A549 (cell line): ENCODE measurements at regions of chr7 and their contacts with region 1.

Region 1: GRCh38 chr7:149147072-149147751 is at the start of gene ZNF398:
- DNase-seq: peak; percentile 82 to 85
- ATAC-seq: peak; percentile 82 to 91
- H3K4me3 ChIP-seq: peak within 1 kb of the TSS; percentile 91
- H3K27ac ChIP-seq: peak within 1 kb of the TSS; percentile 98 to 99
- H3K4me1 ChIP-seq: peaks cover 32% of the 10 kb centered on the region
- CTCF ChIP-seq: peak; percentile 93
- EP300 ChIP-seq: no peak
- POLR2A ChIP-seq: peak; percentile 84
- RAD21 ChIP-seq: no peak; a peak in 1 of 5 replicates
- polyA plus RNA-seq, gene ZNF398: 8.1 and 8.4 TPM in 2 replicates

Region 2: GRCh38 chr7:149133028-149133705 is 14.0 kb before region 1 on chr7:
- CTCF ChIA-PET with region 1: interaction called, 84 read pairs
- POLR2A ChIA-PET with region 1: interaction called, 16 read pairs
- DNase-seq: no peak
- ATAC-seq: no peak
- H3K4me3 ChIP-seq: no peak overlapping the region
- H3K27ac ChIP-seq: no peak overlapping the region
- H3K4me1 ChIP-seq: peaks cover 3% of the 10 kb centered on the region
- CTCF ChIP-seq: no peak
- EP300 ChIP-seq: no peak
- POLR2A ChIP-seq: no peak
- RAD21 ChIP-seq: no peak

Region 3: DNA sequence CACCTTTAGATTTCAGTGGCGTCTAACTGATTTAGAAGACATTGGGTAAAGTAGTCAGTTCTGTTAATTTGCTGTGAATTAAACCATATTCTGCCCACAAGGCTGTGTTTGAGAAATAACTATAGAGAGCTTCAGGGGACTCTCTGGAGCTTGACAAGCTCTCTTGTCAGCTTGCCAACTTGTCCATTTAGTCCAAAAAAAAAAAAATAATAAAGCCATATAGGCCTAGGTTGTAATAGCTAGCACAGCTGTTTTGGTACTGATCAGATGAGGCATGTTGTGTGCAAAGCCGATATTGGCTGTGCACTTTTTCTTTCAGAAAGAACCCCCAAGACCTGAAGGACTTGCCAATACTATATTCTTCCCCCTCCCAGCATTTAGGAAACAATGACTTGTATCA is 27.9 kb after region 1 on chr7:
- CTCF ChIA-PET with region 1: interaction called, 60 read pairs
- POLR2A ChIA-PET with region 1: interaction called, 3 read pairs
- DNase-seq: no peak
- ATAC-seq: no peak
- H3K4me3 ChIP-seq: no peak overlapping the region
- H3K27ac ChIP-seq: no peak overlapping the region
- H3K4me1 ChIP-seq: peaks cover 19% of the 10 kb centered on the region
- CTCF ChIP-seq: no peak
- EP300 ChIP-seq: no peak
- POLR2A ChIP-seq: no peak
- RAD21 ChIP-seq: no peak

Region 4: DNA sequence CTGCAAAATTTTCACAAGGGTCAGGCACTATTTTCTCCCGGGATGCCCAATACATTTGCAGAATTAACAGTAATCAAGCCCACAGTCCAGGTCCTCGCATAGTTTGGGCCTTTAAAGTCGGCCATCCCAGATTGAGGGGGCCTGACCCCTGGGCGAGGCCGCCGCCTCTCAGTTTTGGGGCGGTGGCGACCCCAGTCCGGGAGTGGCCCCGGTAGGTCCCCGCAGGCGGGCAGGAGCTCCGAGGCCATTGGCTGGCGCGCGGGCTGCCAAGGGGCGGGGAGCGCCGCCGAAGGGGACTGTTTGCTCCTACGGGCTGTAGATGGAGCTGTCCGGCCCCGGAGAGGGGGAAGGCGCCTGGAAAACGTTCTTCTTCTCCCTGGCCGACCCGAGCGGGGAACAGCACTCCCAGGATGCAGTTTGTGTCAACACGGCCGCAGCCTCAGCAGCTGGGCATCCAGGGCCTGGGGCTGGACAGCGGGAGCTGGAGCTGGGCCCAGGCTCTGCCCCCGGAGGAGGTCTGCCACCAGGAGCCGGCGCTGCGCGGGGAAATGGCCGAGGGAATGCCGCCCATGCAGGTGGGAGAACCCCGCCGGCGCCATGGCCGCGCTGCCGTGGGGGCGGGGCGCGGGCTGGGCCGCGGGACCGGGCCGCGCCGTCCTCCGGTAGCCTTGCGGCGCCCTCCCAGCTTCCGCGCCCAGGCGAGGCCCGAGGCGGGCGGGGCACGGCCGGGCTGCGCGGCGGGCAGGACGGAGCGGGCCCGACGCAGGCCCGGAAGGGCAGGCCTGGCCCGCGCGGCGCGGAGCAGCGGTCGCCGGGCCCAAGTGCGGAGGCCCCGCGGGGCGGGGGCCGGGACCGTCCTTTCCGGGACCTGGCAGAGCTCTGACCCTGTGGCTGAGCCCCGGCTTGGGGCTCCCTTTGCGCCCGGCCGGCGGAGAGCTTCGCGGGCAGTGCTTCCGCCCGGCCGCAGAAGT is 48.3 kb after region 1 on chr7 and contains the start of gene ZNF282:
- CTCF ChIA-PET with region 1: interaction called, 16 read pairs
- POLR2A ChIA-PET with region 1: interaction called, 5 read pairs
- DNase-seq: peak; percentile 92 to 96
- ATAC-seq: peak; percentile 98 to 99
- H3K4me3 ChIP-seq: peak within 1 kb of the TSS; percentile 77
- H3K27ac ChIP-seq: peak within 1 kb of the TSS; percentile 93 to 94
- H3K4me1 ChIP-seq: peaks cover 14% of the 10 kb centered on the region; the same call in 1 of the 3 replicates
- CTCF ChIP-seq: peak; percentile 71
- EP300 ChIP-seq: no peak
- POLR2A ChIP-seq: peak; percentile 57
- RAD21 ChIP-seq: peak; percentile 41 to 53; a peak in 4 of 5 replicates
- polyA plus RNA-seq, gene ZNF282: 8.8 and 11.9 TPM in 2 replicates

Region 5: GRCh38 chr7:149261829-149262617 is 114.8 kb after region 1 on chr7 and contains the start of gene ZNF783:
- CTCF ChIA-PET with region 1: interaction called, 8 read pairs
- POLR2A ChIA-PET with region 1: interaction called, 12 read pairs
- DNase-seq: peak; percentile 86 to 94
- ATAC-seq: peak; percentile 90 to 94
- H3K4me3 ChIP-seq: peak within 1 kb of the TSS; percentile 57
- H3K27ac ChIP-seq: peak within 1 kb of the TSS; percentile 88 to 95
- H3K4me1 ChIP-seq: peaks cover 15% of the 10 kb centered on the region; the same call in 2 of the 3 replicates
- CTCF ChIP-seq: peak; percentile 92
- EP300 ChIP-seq: no peak
- POLR2A ChIP-seq: peak; percentile 47
- RAD21 ChIP-seq: peak; percentile 36 to 50; a peak in 4 of 5 replicates
- polyA plus RNA-seq, gene ZNF783: 8.0 and 9.9 TPM in 2 replicates

Region 6: GRCh38 chr7:149385195-149385950 is 238.2 kb after region 1 on chr7:
- CTCF ChIA-PET with region 1: no interaction called
- POLR2A ChIA-PET with region 1: no interaction called
- DNase-seq: no peak
- ATAC-seq: no peak
- H3K4me3 ChIP-seq: no peak overlapping the region
- H3K27ac ChIP-seq: no peak overlapping the region
- H3K4me1 ChIP-seq: no peaks in the 10 kb centered on the region
- CTCF ChIP-seq: no peak
- EP300 ChIP-seq: no peak
- POLR2A ChIP-seq: no peak
- RAD21 ChIP-seq: no peak